Adrenal gland (tissue), 19 donors: ENCODE measurements at regions of chr16 and their contacts with region 1.

Region 1: DNA sequence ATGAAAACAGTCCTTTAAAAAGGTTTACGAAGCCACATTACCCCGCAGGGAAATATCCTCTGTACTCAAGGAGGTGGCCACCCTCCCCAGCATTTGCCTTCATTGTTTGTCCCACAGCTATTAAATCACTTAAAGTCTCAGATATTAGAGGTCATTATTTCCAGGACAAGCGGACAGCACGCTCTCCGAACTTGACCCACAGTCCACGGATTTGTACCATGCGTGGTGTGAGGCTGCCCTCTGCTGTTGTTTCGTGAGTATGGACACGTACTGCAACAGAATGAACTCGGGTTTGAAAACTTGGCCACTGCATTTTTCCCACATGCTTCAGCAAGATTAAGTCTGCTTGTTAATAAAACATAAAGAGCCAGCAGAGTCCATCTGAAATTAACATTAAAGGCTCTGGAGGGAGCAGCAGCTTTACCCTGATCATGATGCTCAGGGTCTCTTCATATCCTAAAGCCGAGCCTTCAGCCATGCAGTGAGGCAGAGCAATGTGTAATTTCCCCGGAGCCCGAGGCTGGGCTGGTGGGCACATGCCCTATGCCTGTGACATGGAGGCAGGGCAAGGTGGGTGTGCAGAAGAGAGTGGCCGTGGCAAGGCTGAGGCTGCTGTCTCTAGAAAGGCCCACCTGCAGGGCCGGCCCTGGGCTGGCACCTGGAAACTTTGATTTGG is 19.7 kb downstream of the MEAK7 start:
- DNase-seq: peak; percentile 61 to 89 (median 78)
- H3K4me3 ChIP-seq: no peak overlapping the region
- H3K27ac ChIP-seq: no peak overlapping the region
- H3K4me1 ChIP-seq: no peaks in the 10 kb centered on the region
- H3K27me3 ChIP-seq: no peaks in the 10 kb centered on the region
- CTCF ChIP-seq: peak; percentile 63 to 93 (median 86)
- POLR2A ChIP-seq: no peak

Region 2: DNA sequence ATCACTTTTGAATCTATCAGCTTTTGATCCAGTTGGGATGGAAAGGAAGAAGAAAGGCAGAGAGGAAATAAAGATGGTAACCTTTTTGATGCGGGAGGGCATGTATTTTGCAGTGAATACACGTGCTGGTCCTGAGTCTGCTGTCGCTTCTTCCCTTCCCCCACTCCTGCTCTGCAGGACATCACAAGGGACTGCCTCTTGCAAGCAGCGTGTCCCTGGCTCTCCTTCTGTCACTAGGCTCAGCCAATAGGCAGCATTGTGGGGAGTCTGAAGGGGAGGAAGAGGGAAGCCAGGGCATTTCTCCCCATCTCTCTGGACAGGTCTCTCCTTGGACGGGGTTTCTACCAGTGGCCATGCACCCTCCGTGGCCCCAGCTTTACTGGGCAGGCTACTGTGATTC is 205.7 kb before region 1 on chr16:
- intact Hi-C with region 1: loop called (anchors 2 to 5 kb)
- DNase-seq: no peak
- H3K4me3 ChIP-seq: no peak overlapping the region
- H3K27ac ChIP-seq: no peak overlapping the region
- H3K4me1 ChIP-seq: no peaks in the 10 kb centered on the region
- H3K27me3 ChIP-seq: no peaks in the 10 kb centered on the region
- CTCF ChIP-seq: no peak
- POLR2A ChIP-seq: no peak

Region 3: GRCh38 chr16:84284154-84284722 is 200.5 kb before region 1 on chr16:
- intact Hi-C with region 1: loop called (anchors 2 to 5 kb)
- DNase-seq: peak; percentile 26 to 82 (median 65)
- H3K4me3 ChIP-seq: no peak overlapping the region
- H3K27ac ChIP-seq: peak overlapping the region in 3 of 5 donors; percentile 58 to 89 (median 70)
- H3K4me1 ChIP-seq: no peaks in the 10 kb centered on the region
- H3K27me3 ChIP-seq: no peaks in the 10 kb centered on the region
- CTCF ChIP-seq: no peak
- POLR2A ChIP-seq: no peak

Region 4: DNA sequence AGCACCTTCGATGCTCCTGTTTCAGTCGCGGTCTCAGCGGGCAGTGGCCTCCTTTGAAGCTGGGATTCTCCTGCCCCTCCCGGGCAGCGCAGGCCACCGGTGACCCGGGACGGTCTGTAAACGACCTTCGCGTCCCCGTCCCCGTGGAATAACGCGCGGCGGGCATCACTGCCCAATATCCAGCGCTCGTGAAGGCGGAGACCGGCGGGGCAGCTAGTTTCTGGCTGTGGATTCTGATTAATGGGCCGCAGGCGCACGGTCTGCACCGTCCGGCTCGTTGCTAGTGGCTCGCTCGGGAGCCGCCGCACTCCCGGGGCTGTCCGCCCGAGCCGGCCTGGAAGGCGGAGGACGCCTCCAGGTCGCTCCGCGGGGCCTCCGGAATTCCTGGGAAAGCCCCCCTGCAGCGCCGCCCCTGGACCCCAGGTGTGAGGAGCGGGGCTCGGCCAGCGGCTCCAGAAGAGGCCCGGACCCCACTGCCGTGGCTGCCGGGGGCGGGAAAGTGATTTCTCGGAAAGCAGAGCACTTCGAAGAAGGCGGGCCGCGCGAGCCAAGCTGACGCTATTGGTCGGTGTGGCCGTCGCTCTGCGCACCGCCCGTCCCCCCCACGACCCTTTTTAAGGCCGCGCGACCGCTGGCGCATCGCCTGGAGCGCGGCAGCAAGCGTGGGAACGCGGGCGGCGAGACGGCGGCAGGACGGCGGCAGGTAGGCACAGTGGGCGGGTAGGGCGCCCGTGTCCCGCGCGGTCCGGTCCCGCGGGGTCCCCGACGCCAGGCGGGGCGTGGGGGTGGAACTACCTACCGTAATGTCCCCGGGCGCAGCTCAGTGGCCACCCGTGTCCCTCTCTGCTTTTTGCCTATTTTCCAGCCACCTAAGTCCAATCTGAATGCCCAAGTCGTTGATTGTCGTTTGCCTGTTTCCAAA is 1414.1 kb after region 1 on chr16 and contains the start of gene IRF8:
- intact Hi-C with region 1: no loop called
- DNase-seq: peak; percentile 57 to 72 (median 59)
- H3K4me3 ChIP-seq: peak within 1 kb of the TSS in 2 of 4 donors; percentile 6 to 67
- H3K27ac ChIP-seq: peak within 1 kb of the TSS in 3 of 5 donors; percentile 46 to 85 (median 56)
- H3K4me1 ChIP-seq: peaks cover 0 to 9% of the 10 kb centered on the region in 2 donors
- H3K27me3 ChIP-seq: peaks cover 23% of the 10 kb centered on the region
- CTCF ChIP-seq: no peak
- POLR2A ChIP-seq: peak; percentile 47 to 61
- total RNA-seq, gene IRF8: 5.0 to 40.1 (median 18.8) TPM